Heart left ventricle (tissue), 16 donors: ENCODE measurements at regions of chr6 and their contacts with region 1.

Region 1: DNA sequence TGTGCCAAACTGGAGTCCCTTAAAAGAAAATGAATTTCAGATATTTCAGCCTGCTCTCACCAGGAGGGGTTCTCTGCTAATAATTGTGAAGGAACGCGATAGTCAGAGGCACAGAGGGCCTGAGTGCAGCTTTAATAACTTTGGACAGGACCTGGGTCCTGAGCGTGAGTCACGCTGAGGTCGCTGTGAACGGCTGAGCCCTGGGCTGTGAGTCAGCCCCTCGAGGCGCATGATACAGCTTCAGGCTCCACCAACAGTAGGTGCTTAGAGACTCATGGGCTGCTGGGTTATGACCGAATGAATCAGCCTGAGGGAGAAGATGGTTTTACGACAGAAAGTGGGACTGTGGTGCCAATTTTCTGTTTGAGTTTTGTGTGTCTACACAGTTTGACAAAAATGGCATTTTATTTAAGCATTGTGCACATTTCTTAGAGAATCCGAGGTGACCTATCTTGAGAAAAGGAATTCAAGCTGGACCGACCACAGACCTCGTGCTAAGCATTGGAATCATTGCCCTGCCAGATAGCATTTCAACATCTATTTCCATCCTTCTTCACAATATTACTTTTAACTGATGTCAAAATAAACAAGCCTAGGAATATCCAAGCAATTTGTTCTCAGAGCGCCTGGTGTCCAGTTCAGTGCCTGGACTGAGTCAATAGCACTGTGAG is 183.0 kb downstream of the THBS2 start:
- DNase-seq: peak; percentile 50 to 84 (median 80)
- ATAC-seq: peak; percentile 80 to 96 (median 92)
- H3K4me3 ChIP-seq: no peak overlapping the region
- H3K27ac ChIP-seq: peak overlapping the region in 6 of 12 donors; percentile 35 to 77 (median 46)
- H3K4me1 ChIP-seq: peaks cover 0 to 16% (median 0%) of the 10 kb centered on the region in 12 donors
- H3K27me3 ChIP-seq: no peaks in the 10 kb centered on the region
- CTCF ChIP-seq: peak in 2 of 12 donors; percentile 9 to 22
- POLR2A ChIP-seq: no peak

Region 2: GRCh38 chr6:168640752-168641151 is 429.9 kb before region 1 on chr6:
- intact Hi-C with region 1: no loop called
- DNase-seq: no peak
- ATAC-seq: no peak
- H3K4me3 ChIP-seq: peak overlapping the region in 1 of 12 donors; percentile 21
- H3K27ac ChIP-seq: peak overlapping the region in 2 of 12 donors; percentile 3 to 30
- H3K4me1 ChIP-seq: peaks cover 0 to 53% (median 12%) of the 10 kb centered on the region in 12 donors
- H3K27me3 ChIP-seq: peaks cover 0 to under 1% (median 0%) of the 10 kb centered on the region in 9 donors
- CTCF ChIP-seq: no peak
- POLR2A ChIP-seq: no peak

Region 3: GRCh38 chr6:169141671-169142537 is 71.3 kb after region 1 on chr6:
- intact Hi-C with region 1: loop called in 1 of 10 experiments (anchors 10 kb)
- DNase-seq: peak in 4 of 5 donors; percentile 56 to 82 (median 66)
- ATAC-seq: peak; percentile 68 to 91 (median 84)
- H3K4me3 ChIP-seq: no peak overlapping the region
- H3K27ac ChIP-seq: peak overlapping the region in 10 of 12 donors; percentile 17 to 74 (median 56)
- H3K4me1 ChIP-seq: peaks cover 0 to 20% (median 9%) of the 10 kb centered on the region in 12 donors
- H3K27me3 ChIP-seq: no peaks in the 10 kb centered on the region
- CTCF ChIP-seq: no peak
- POLR2A ChIP-seq: no peak

Region 4: DNA sequence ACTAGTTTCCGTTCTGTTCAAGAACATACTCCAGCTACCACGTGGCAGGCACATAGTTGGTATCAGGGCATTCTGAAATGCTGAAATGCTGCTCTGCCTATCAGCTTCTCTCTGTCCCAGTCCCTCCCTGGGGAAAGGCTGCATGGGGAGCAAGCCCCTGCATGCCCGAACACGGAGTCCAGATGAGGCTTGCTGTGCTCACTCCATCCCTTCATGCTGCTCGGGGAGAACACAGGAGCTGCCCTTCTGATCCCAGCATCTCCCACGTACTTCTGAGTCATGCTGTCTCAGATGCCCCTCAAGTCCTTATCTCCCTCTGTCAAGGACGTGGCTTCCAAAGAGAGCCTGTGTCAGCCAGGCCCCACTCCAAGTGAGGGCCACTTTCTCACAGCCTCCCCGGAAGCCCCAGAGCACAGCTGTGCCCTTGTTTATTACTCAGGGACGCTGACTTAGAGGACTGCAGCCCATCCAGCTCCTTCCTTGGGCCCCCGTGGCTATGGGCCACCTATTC is 153.6 kb after region 1 on chr6:
- intact Hi-C with region 1: loop called in 1 of 10 experiments (anchors 10 kb)
- DNase-seq: peak in 3 of 5 donors; percentile 41 to 65 (median 61)
- ATAC-seq: peak; percentile 21 to 88 (median 79)
- H3K4me3 ChIP-seq: no peak overlapping the region
- H3K27ac ChIP-seq: peak overlapping the region in 9 of 12 donors; percentile 25 to 68 (median 44)
- H3K4me1 ChIP-seq: peaks cover 0 to 9% (median 0%) of the 10 kb centered on the region in 12 donors
- H3K27me3 ChIP-seq: no peaks in the 10 kb centered on the region
- CTCF ChIP-seq: no peak
- POLR2A ChIP-seq: no peak